ENCODE measurements at regions of chr10 and their contacts with region 1.

Region 1: DNA sequence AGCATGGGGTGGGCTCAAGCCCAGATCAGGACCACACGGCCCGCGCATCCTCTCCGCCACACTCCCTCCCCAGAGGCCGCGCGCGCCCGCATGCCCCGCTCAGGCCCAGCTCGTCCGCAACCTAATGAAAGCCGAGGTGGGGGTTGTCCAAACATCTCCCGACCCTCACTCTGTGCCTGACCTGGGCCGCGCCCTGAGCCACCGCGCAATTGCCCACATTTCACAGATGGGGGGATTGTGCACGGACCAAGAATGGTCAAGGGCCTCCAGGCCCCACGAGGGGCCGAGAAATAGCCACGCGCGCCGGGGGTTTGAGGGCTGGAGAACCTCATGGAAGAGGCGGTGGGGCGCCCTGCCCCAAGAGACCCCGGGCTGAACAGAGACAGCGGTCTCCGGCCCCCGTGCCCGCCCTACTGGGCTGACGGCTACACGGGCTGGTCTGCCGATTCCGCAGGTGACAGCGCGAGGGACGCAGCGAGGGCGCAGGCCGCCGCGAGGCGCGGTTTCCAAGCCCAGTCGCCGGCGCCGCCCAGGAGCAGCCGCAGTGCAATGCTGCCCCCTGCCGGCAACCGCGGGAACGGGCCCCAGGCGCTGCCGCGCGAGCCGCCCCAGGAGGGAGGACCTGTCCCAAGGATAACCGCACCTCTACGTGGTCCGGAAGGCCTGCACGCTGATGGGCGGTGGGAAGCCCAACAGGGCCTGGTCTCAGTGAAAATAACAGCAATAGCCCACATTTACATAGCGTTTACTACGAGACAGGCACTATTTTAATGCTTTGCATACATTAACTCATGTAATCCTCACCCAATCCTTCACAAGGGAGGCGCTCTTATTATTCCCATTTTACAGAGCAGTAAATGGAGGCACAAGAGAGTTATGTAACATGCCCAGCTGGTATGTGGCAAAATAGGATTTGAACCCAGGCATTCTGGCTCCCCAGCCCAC is 10.5 kb upstream of the GRID1 start:
- DNase-seq: peak; percentile 84
- ATAC-seq: peak; percentile 98

Region 2: DNA sequence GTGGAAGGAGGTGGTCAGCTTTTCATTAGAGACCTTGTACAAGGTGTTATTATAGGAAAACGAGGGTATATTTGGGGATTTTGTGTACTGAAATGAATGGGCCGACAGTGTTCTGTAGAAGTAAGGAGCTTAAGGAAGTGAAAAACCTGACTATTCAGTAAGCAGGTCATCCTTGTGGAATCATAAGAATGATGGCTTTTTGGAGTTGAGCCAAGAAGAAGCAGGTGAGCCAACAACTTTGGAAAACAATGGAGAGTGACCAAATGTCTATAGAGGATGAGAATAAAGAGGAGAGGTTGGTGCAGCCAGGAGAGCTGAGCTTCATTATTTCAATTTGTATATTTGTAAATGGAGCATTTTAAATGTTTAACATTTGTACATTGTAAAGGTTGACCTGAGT is 1453.0 kb before region 1 on chr10:
- intact Hi-C with region 1: loop called (anchors 10 kb)
- DNase-seq: no peak
- ATAC-seq: no peak

Region 3: GRCh38 chr10:85548034-85548433 is 829.1 kb before region 1 on chr10:
- intact Hi-C with region 1: loop called (anchors 5 kb)
- DNase-seq: no peak
- ATAC-seq: peak; percentile 58

Region 4: GRCh38 chr10:85786401-85786899 is 590.7 kb before region 1 on chr10:
- intact Hi-C with region 1: loop called (anchors 5 kb)
- DNase-seq: no peak
- ATAC-seq: peak; percentile 70

Region 5: GRCh38 chr10:85995791-85996190 is 381.3 kb before region 1 on chr10:
- intact Hi-C with region 1: loop called (anchors 10 kb)
- DNase-seq: no peak
- ATAC-seq: peak; percentile 68

Region 6: DNA sequence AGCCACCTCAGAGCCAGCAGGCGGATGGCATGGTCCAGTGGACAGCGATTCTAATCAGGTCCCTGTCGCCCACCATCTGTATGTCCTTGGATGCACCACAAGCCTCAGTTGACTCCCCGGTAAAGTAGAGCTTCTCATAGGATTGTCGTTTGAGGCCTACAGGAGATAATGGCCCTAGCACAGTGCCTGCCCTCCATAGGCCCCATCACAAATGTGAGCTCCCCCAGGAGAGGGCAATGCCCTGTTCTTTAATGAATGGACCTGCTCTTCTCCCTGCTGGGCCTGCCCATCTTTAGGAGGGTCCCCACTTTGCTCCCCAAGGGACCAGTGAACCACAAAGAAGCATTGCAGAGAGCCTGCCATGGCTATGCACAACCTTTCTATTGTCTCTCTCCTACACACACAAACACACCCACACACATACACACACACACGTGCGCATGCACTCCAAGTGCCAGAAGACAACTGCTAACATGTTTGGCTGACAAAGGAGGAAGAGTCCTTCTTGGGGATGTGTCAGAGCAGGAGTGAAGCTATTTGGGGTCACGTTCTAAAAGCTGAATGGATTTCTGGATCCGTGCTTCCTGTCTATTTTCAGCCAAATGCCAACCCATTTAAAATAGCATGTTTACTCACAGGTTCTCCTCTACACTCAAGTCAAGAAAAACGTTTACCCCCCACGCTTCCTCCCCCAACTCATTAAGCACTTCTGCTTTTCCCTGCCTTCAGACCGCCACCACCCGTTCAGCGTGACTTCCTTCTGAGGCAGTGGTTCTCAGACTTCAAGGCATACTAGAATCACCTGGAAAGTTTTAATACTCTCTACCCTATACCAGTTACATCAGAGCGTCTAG is 206.6 kb before region 1 on chr10:
- intact Hi-C with region 1: no loop called
- DNase-seq: no peak
- ATAC-seq: no peak

Region 7: DNA sequence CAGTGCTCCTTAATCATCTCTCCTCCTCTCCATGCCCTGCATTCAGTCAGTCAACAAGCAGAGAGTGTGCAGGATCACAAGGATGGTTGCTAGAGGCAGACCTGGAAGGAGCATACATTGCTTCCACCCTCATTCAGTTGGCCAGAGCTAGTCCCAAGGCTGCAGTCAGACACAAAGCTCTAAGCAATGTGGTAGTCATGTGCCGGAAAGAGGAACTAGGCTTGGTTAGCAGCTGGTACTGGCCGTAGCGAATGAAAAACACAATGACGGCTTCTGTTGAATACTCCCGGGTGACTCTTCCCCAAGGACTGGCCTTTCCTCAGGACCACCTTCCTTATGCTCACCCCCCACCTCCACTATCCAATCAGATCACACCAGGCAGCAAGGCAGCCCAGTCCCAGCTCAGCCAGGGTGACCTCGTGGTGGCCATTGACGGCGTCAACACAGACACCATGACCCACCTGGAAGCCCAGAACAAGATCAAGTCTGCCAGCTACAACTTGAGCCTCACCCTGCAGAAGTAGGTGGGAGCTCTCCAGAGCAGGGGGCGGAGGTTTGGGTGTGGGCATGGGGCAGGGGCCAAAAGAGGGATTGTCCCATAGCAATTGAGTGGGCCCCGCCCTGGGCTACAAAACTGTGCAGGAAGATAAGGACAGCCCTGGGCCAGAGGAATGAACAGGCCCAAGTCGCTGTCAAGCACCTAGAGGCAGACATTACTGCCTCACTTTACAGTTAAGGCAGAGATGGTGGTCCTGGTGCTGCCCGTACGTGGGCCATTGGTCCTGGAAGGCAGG is 302.1 kb after region 1 on chr10:
- intact Hi-C with region 1: no loop called
- DNase-seq: no peak
- ATAC-seq: no peak